Natural killer cell (primary cell): ENCODE measurements at regions of chr2 and their contacts with region 1.

Region 1: DNA sequence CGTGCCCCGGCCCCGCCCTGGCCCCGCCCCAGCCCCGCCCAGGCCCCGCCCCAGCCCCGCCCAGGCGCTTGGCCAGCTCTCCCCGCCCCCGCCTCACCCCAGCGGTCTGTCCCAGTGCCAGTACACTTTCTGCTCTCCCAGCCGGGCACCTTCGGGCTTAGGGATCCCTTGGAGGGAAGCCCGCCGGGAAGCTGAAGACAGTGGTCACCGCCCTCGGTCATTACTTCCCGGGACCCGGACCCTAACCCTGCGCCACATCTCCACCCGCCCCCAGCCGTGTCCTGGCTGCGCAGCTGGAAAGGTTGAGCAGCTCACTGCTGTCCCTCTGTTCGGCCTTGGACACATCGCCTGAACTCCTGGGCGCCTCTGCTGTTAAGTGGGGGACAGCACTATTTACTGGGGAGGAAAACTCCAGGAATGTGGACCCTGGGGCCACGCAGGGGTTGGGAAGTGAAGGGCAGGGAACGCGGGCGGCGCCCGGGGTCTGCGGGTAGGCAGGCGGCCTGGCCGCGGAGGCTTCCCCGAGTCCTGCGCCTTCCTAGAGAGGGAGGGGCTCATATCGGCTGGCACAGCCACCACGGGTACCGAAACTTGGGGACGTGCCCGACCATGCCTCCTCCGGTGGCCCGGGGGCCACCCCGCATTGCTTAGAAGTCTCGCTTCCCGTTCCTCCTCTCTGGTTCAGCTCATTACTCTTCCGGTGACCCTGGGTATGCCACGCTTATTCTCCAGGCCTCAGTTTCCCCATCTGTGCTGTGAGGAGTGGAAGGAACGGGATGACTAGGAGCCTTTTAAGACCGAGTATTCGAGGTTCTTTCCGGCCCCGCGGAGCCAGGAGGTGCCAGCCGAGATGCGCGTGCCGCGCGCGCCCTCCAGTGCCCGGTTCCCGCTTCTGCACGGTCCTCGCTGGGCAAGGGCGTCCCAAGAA is 121.0 kb downstream of the GYPC start:
- DNase-seq: peak; percentile 74 to 89
- ATAC-seq: peak; percentile 88 to 95 (median 93)
- H3K4me3 ChIP-seq: peak overlapping the region; percentile 70
- H3K4me3 Mint-ChIP-seq: peak overlapping the region; percentile 99
- H3K27ac ChIP-seq: peak overlapping the region; percentile 9
- H3K27ac Mint-ChIP-seq: peak overlapping the region; percentile 74 to 86
- H3K4me1 ChIP-seq: peaks cover 12% of the 10 kb centered on the region
- H3K4me1 Mint-ChIP-seq: peaks cover 11 to 13% of the 10 kb centered on the region in 2 donors
- H3K27me3 ChIP-seq: no peaks in the 10 kb centered on the region
- H3K27me3 Mint-ChIP-seq: peaks cover 6 to 16% of the 10 kb centered on the region in 2 donors
- CTCF ChIP-seq: peak; percentile 97

Region 2: DNA sequence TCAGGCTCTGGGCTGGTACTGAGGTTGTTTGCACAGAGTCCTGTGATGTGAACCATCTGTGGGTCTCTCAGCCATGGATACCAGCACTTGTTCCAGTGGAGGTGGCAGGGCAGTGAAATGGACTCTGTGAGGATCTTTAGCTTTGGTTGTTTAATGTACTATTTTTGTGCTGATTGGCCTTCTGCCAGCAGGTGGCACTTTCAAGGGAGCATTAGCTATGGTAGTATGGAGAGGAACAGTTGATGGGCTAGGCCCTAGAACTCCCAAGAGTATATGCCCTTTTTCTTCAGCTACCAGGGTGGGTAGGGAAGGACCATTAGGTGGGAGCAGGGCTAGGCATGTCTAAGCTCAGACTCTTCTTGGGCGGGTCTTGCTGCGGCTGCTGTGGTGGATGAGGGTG is 378.0 kb before region 1 on chr2:
- intact Hi-C with region 1: loop called (anchors 10 kb)
- DNase-seq: peak in 1 of 2 donors; percentile 35
- ATAC-seq: no peak
- H3K4me3 ChIP-seq: no peak overlapping the region
- H3K4me3 Mint-ChIP-seq: no peak overlapping the region
- H3K27ac ChIP-seq: no peak overlapping the region
- H3K27ac Mint-ChIP-seq: no peak overlapping the region
- H3K4me1 ChIP-seq: no peaks in the 10 kb centered on the region
- H3K4me1 Mint-ChIP-seq: no peaks in the 10 kb centered on the region
- H3K27me3 ChIP-seq: no peaks in the 10 kb centered on the region
- H3K27me3 Mint-ChIP-seq: peaks cover 0 to 7% of the 10 kb centered on the region in 2 donors
- CTCF ChIP-seq: no peak

Region 3: DNA sequence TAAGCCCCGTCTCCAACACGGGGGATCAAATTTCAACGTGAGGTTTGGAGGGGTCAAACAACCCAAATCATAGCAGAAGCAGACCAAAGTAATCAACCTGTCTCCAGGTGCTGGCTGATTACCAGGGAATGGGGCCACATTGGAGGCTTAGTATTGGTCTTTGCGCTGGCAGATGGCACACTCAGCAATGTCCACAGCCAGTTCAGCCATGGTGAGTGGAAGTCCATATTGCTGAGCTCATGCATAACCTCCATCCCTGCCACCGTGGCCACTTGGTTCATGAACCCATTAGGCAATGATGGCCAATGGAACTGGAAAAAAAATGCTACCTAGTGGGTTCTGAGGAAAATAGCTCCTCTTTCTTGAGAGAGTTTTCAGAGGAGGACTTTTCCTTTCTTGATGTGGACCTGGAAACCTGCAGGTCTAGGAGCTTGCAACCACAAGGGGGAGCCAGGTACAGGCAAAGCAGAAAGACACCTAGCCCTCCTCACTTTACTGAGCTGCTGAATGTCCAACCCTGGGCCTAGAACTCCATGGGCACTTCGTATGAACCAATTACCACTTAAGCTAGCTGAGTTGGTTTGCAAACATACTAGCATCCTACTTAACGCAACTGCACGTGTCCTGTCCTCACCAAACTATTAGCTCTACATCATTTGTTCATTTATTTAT is 249.0 kb before region 1 on chr2:
- intact Hi-C with region 1: loop called (anchors 1 kb)
- DNase-seq: peak; percentile 42 to 85
- ATAC-seq: peak in 2 of 3 donors; percentile 60 to 74
- H3K4me3 ChIP-seq: no peak overlapping the region
- H3K4me3 Mint-ChIP-seq: no peak overlapping the region
- H3K27ac ChIP-seq: no peak overlapping the region
- H3K27ac Mint-ChIP-seq: no peak overlapping the region
- H3K4me1 ChIP-seq: no peaks in the 10 kb centered on the region
- H3K4me1 Mint-ChIP-seq: no peaks in the 10 kb centered on the region
- H3K27me3 ChIP-seq: no peaks in the 10 kb centered on the region
- H3K27me3 Mint-ChIP-seq: no peaks in the 10 kb centered on the region
- CTCF ChIP-seq: peak; percentile 58